BJ (cell line): ENCODE measurements at regions of chr15 and their contacts with region 1.

Region 1: DNA sequence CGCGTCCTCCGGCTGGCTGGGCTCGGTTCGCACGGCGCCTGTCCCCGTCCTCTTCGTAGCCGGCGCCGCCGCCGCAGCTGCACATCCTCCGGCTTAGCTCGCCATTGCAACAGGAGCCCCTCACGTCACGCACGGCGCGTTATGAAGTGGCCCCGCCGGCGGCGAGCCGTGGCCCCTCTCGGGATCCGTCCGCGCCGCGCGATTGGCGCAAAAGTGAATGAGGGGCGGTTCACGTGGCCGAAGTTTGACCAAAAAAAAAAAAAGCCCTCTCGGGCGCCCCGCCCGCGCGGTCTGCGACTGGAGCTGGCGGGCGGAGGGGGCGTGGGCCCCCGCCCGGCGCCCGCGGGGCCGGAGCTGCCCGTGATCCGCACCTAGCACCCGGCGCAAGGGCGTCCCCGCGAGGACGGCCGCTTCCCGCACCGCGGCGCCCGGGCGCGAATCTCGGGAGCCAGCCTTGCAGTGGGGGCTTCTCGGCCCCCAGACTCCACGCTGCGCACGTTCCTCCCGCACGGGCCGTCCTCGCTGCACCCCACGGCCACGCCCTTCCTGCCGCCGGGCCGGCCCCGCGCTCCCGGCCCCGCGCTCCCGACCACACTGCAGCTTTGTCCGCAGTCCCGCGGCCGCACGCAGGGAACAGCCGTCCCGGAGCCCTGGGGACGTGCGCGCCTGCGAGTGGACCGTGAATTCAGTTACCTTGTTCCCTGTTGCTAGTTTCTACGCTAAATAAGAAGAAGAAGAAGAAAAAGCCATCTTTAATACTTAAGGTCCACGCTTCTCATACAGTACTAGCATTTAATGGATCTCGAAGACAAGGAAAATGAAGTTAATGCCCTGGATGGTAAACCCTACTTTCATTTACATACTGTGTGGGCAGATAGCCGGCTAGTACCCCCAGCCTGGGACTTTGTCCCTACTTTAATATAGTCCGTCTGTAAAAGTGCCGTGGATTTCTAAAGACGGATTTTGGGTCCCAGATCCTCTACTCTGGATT is at the start of gene CHSY1:
- DNase-seq: peak; percentile 58
- H3K4me3 ChIP-seq: peak within 1 kb of the TSS; percentile 78
- H3K27me3 ChIP-seq: no peaks in the 10 kb centered on the region
- CTCF ChIP-seq: no peak
- polyA plus RNA-seq, gene CHSY1: 17.7 and 24.3 TPM in 2 replicates

Region 2: GRCh38 chr15:100500226-100500990 is 751.7 kb before region 1 on chr15:
- CTCF ChIA-PET with region 1: no interaction called
- POLR2A ChIA-PET with region 1: no interaction called
- DNase-seq: no peak
- H3K4me3 ChIP-seq: no peak overlapping the region
- H3K27me3 ChIP-seq: no peaks in the 10 kb centered on the region
- CTCF ChIP-seq: no peak

Region 3: GRCh38 chr15:101008158-101009139 is 243.7 kb before region 1 on chr15:
- CTCF ChIA-PET with region 1: interaction called, 73 read pairs
- POLR2A ChIA-PET with region 1: no interaction called
- DNase-seq: no peak
- H3K4me3 ChIP-seq: no peak overlapping the region
- H3K27me3 ChIP-seq: no peaks in the 10 kb centered on the region
- CTCF ChIP-seq: peak; percentile 72

Region 4: DNA sequence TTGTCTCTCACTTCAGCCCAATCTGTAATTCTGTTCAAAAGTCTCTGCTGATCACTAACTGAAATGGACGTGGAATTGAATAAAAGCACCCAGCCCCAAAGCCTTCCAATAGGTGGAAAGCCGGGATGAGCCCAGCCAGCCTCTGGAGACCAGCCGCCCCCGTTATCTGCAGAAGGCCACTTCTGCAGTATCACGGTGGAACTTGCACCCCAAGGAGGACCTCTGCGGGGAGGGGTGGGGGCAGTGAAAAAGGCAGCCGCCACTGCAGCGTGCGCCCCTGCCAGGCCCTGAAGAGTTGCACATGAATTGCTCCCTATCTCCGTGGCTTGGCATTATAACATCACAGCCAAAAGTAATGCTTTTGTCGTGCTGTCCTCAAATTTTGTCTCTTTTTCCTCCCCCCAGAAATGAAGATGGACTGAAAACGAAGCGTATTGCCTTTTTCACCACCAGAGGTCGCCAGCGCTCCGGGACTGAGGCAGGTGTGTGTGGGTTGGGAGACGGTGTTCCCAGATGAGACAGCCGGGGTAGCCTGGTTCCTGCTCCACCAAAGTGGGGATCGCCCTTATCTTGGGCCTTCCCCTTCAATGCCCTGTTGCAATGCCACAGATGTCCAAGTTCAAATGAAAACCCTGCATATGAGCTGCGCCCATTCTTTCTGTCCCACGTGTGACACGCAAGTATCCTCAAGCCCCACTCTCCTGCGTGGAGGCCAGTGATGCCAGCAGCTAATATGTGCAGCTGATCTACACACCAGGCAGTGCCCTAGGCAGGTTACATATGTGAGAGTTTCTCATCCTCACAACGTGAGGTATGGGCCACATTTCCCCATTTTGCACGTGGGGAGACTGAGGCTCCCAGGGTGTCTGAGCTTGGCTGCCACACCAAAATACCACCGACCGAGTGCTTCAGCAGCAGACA is 236.9 kb before region 1 on chr15:
- CTCF ChIA-PET with region 1: interaction called, 73 read pairs
- POLR2A ChIA-PET with region 1: no interaction called
- DNase-seq: no peak
- H3K4me3 ChIP-seq: no peak overlapping the region
- H3K27me3 ChIP-seq: no peaks in the 10 kb centered on the region
- CTCF ChIP-seq: peak; percentile 89

Region 5: DNA sequence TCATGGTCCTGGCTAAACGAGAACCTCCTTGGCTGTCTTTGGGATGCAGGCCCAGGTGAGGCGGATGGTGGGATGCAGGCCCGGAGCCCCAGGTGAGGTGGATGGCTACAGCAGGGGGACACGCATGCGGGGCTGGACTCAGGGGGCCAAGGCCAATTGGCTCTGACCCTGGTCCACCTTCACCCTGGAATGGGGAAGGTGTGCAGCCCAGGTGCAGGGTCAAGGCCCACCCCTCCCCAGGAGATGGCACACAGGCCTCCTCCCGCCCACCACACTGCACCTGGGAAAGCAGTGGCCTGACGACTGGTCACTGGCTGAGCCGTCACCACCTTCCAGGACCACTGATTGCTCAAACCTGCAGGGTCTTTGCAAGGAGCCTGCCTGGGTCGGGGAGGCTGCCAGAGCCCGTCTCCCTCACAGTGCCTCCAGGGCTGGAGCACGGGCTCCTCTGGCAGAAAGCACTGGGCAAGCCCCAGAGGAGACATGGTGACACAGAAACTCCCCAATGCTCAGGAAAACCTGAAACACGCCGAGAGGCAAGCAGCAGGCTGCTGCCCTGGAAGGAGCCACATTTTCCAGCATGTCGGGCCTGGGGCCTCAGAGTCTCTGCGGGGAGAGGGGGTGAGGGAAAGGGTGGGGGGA is 173.3 kb before region 1 on chr15:
- CTCF ChIA-PET with region 1: interaction called, 15 read pairs
- POLR2A ChIA-PET with region 1: interaction called, 10 read pairs
- DNase-seq: no peak
- H3K4me3 ChIP-seq: no peak overlapping the region
- H3K27me3 ChIP-seq: peaks cover 3% of the 10 kb centered on the region
- CTCF ChIP-seq: no peak

Region 6: GRCh38 chr15:101088788-101089583 is 163.1 kb before region 1 on chr15:
- CTCF ChIA-PET with region 1: interaction called, 43 read pairs
- POLR2A ChIA-PET with region 1: interaction called, 4 read pairs
- DNase-seq: no peak
- H3K4me3 ChIP-seq: no peak overlapping the region
- H3K27me3 ChIP-seq: no peaks in the 10 kb centered on the region; the same call in 1 of the 2 replicates
- CTCF ChIP-seq: peak; percentile 79

Region 7: DNA sequence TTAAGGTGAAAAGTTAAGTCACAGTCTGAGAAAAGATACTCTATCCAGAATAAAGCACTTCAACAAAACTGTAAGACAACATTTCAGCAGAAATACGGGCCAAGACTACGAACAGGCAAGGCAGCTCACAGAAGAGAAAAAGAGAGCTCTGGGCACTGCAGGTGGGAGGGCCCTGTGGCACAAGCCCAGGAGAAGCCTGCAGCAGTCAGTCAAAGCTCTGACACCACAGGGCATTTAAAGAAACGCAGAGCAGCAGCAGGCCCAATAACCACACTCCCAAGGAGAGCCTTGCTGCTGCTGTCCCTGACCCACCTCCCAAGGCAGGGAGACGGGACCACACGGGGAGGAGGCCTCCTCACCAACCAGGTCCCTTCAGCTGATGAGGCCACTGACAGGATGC is 19.4 kb before region 1 on chr15:
- CTCF ChIA-PET with region 1: no interaction called
- POLR2A ChIA-PET with region 1: no interaction called
- DNase-seq: no peak
- H3K4me3 ChIP-seq: no peak overlapping the region
- H3K27me3 ChIP-seq: no peaks in the 10 kb centered on the region
- CTCF ChIP-seq: no peak

Region 8: GRCh38 chr15:101646672-101647071 is 394.5 kb after region 1 on chr15:
- CTCF ChIA-PET with region 1: no interaction called
- POLR2A ChIA-PET with region 1: interaction called, 10 read pairs
- DNase-seq: no peak
- H3K4me3 ChIP-seq: no peak overlapping the region
- H3K27me3 ChIP-seq: no peaks in the 10 kb centered on the region
- CTCF ChIP-seq: no peak